ENCODE measurements at regions of chr21 and their contacts with region 1.

Region 1: GRCh38 chr21:26769613-26770188 is 75.5 kb downstream of the ADAMTS1 start:
- DNase-seq: peak; percentile 73
- ATAC-seq: peak; percentile 75
- H3K4me3 ChIP-seq: no peak overlapping the region
- H3K27ac ChIP-seq: no peak overlapping the region
- H3K4me1 ChIP-seq: no peaks in the 10 kb centered on the region
- H3K27me3 ChIP-seq: no peaks in the 10 kb centered on the region
- CTCF ChIP-seq: peak; percentile 72
- POLR2A ChIP-seq: no peak
- RAD21 ChIP-seq: peak; percentile 66

Region 2: DNA sequence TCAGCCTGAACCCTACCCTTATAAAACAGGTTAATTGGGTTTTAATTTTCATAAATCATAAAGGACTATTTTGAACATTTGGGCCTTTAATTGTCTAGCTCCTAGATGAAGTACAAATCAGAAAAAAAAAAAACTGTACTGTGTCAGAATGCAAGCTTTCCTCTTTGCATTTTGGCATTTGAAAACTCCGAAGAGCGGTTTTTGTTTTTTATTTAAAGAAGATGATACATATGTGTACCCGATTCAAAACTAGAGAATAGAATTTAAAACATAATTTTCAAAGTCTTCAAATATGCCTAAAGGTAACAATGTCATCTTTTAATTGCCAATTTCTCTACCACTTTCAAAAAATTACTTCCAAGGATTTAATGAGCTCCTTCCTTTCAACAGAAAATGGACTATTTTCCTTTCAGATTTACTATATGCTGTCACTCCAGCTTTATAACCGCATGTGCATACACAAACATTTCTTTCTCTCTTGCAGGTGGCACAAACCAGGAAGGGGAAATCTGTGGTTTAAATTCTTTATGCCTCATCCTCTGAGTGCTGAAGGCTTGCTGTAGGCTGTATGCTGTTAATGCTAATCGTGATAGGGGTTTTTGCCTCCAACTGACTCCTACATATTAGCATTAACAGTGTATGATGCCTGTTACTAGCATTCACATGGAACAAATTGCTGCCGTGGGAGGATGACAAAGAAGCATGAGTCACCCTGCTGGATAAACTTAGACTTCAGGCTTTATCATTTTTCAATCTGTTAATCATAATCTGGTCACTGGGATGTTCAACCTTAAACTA is 1196.1 kb before region 1 on chr21:
- CTCF ChIA-PET with region 1: no interaction called
- POLR2A ChIA-PET with region 1: no interaction called
- dilution Hi-C with region 1: no loop called
- in situ Hi-C with region 1: no loop called
- intact Hi-C with region 1: no loop called
- DNase-seq: peak; percentile 99
- ATAC-seq: peak; percentile 93
- H3K4me3 ChIP-seq: no peak overlapping the region
- H3K27ac ChIP-seq: no peak overlapping the region
- H3K4me1 ChIP-seq: peaks cover 9% of the 10 kb centered on the region; the same call in 1 of the 2 replicates
- H3K27me3 ChIP-seq: no peaks in the 10 kb centered on the region
- CTCF ChIP-seq: no peak
- POLR2A ChIP-seq: no peak
- RAD21 ChIP-seq: no peak

Region 3: DNA sequence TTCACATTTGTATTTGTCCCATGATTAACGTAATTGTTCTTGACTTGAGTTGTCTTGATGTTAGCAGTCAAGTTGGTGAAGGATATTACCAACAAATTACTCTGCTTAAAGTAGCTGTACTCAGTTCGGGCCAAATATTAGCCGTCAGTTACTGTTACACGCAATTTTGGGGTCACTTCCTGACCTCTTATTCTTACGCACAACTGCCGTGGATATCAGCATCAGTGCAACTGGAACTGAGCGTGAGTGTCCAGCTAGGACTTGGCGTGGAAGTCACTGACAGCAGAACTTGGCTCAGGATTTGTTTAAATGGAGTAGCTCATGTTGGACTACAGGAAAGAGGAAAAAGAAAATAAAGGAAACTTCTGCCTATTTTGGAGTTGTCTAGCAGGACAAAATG is 19.1 kb after region 1 on chr21:
- CTCF ChIA-PET with region 1: no interaction called
- POLR2A ChIA-PET with region 1: no interaction called
- dilution Hi-C with region 1: no loop called
- in situ Hi-C with region 1: no loop called
- intact Hi-C with region 1: loop called (anchors 1 kb)
- DNase-seq: peak; percentile 27
- ATAC-seq: no peak
- H3K4me3 ChIP-seq: no peak overlapping the region
- H3K27ac ChIP-seq: no peak overlapping the region
- H3K4me1 ChIP-seq: no peaks in the 10 kb centered on the region
- H3K27me3 ChIP-seq: no peaks in the 10 kb centered on the region
- CTCF ChIP-seq: no peak
- POLR2A ChIP-seq: no peak
- RAD21 ChIP-seq: no peak

Region 4: GRCh38 chr21:26835027-26835713 is 65.5 kb after region 1 on chr21:
- CTCF ChIA-PET with region 1: interaction called, 3 read pairs
- POLR2A ChIA-PET with region 1: no interaction called
- dilution Hi-C with region 1: no loop called
- in situ Hi-C with region 1: loop called (anchors 5 kb)
- intact Hi-C with region 1: loop called (anchors 1 kb)
- DNase-seq: peak; percentile 85
- ATAC-seq: peak; percentile 54
- H3K4me3 ChIP-seq: no peak overlapping the region
- H3K27ac ChIP-seq: no peak overlapping the region
- H3K4me1 ChIP-seq: peaks cover 2% of the 10 kb centered on the region
- H3K27me3 ChIP-seq: no peaks in the 10 kb centered on the region
- CTCF ChIP-seq: no peak
- POLR2A ChIP-seq: peak; percentile 80
- RAD21 ChIP-seq: no peak